ENCODE measurements at regions of chr4 and their contacts with region 1.

Region 1: GRCh38 chr4:175536852-175537453 is 275.1 kb downstream of the GPM6A start:
- DNase-seq: peak; percentile 75
- H3K4me3 ChIP-seq: 0 out of 2 replicates have a peak overlapping the region, but pooled peaks have one; percentile 1
- H3K27ac ChIP-seq: no peak overlapping the region
- H3K4me1 ChIP-seq: peaks cover 5% of the 10 kb centered on the region; the same call in 1 of the 2 replicates
- H3K27me3 ChIP-seq: no peaks in the 10 kb centered on the region

Region 2: GRCh38 chr4:174764105-174764729 is 772.7 kb before region 1 on chr4:
- in situ Hi-C with region 1: loop called (anchors 25 kb)
- DNase-seq: peak; percentile 65
- H3K4me3 ChIP-seq: no peak overlapping the region
- H3K27ac ChIP-seq: no peak overlapping the region
- H3K4me1 ChIP-seq: no peaks in the 10 kb centered on the region
- H3K27me3 ChIP-seq: peaks cover 7% of the 10 kb centered on the region; the same call in 1 of the 2 replicates

Region 3: DNA sequence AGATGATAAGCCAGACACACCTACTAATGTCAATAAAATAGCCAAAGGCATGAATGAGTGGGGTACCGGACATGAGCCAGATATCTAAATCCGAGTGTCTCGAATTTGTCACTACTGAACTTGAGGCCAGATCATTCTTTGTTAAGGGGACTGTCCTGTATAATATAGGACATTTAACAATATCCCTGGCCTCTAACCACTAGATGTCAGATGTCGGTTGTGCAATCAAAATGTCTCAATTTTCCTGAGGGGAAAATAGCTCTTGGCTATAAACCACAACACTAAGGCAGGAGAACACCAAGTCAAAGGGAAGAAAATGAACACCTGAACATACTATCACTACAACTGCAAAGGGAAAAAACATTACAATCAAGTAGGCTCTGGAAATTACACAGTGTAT is 120.6 kb after region 1 on chr4:
- in situ Hi-C with region 1: no loop called
- DNase-seq: no peak
- H3K4me3 ChIP-seq: no peak overlapping the region
- H3K27ac ChIP-seq: no peak overlapping the region
- H3K4me1 ChIP-seq: no peaks in the 10 kb centered on the region
- H3K27me3 ChIP-seq: no peaks in the 10 kb centered on the region

Measured in GM23248 (cell line).